Gastrocnemius medialis (tissue), 4 donors: ENCODE measurements at regions of chr11 and their contacts with region 1.

Region 1: GRCh38 chr11:83071567-83072349 is at the start of gene RAB30:
- DNase-seq: peak; percentile 99
- ATAC-seq: peak; percentile 95 to 97
- H3K4me3 ChIP-seq: peak within 1 kb of the TSS; percentile 73 to 90 (median 83)
- H3K27ac ChIP-seq: peak within 1 kb of the TSS; percentile 87 to 98 (median 96)
- H3K4me1 ChIP-seq: peaks cover 42 to 54% of the 10 kb centered on the region in 2 donors
- H3K27me3 ChIP-seq: no peaks in the 10 kb centered on the region
- CTCF ChIP-seq: no peak
- POLR2A ChIP-seq: peak; percentile 91 to 94
- total RNA-seq, gene RAB30: 29.8 to 57.1 (median 33.9) TPM

Region 2: DNA sequence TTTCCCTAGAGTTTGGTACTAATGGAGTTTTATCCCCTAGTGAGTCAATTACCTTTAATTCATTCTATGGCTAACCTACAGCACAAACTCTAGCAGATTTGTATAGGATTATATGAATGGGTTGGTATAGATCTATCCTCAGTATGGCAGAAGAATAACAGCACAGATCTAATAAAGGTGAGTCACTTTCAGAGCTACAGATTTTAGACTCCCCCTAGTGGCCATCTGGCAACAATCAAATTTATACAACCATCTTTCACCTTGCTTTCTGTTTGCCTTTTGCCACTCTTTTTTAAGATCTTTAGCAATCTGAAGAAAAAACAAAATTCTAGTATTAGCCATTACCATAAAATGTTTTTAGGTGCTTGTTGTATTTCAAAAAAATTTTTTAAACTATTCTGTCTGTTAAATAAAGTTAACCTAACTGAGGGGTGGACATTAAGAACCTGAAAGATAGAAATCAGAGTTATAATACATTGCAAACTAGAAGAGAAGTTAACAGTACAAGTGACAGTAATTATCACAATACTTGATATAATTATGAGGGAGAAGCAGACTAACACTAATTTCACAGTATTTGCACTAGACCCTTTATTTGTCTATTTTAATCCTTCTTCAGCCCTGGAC is 144.4 kb before region 1 on chr11:
- in situ Hi-C with region 1: loop called in 2 of 4 experiments (anchors 10 to 25 kb)
- intact Hi-C with region 1: loop called (anchors 5 kb)
- DNase-seq: no peak
- ATAC-seq: peak in 1 of 2 donors; percentile 80
- H3K4me3 ChIP-seq: no peak overlapping the region
- H3K27ac ChIP-seq: no peak overlapping the region
- H3K4me1 ChIP-seq: no peaks in the 10 kb centered on the region
- H3K27me3 ChIP-seq: no peaks in the 10 kb centered on the region
- CTCF ChIP-seq: peak; percentile 56 to 81 (median 58)
- POLR2A ChIP-seq: no peak

Region 3: GRCh38 chr11:83033972-83034672 is 37.6 kb before region 1 on chr11:
- in situ Hi-C with region 1: no loop called
- intact Hi-C with region 1: loop called (anchors 1 kb)
- DNase-seq: peak; percentile 71 to 86
- ATAC-seq: peak; percentile 72 to 77
- H3K4me3 ChIP-seq: peak overlapping the region; percentile 23 to 54 (median 48)
- H3K27ac ChIP-seq: peak overlapping the region; percentile 89 to 94 (median 92)
- H3K4me1 ChIP-seq: peaks cover 75 to 81% of the 10 kb centered on the region in 2 donors
- H3K27me3 ChIP-seq: no peaks in the 10 kb centered on the region
- CTCF ChIP-seq: no peak
- POLR2A ChIP-seq: peak; percentile 41 to 45

Region 4: DNA sequence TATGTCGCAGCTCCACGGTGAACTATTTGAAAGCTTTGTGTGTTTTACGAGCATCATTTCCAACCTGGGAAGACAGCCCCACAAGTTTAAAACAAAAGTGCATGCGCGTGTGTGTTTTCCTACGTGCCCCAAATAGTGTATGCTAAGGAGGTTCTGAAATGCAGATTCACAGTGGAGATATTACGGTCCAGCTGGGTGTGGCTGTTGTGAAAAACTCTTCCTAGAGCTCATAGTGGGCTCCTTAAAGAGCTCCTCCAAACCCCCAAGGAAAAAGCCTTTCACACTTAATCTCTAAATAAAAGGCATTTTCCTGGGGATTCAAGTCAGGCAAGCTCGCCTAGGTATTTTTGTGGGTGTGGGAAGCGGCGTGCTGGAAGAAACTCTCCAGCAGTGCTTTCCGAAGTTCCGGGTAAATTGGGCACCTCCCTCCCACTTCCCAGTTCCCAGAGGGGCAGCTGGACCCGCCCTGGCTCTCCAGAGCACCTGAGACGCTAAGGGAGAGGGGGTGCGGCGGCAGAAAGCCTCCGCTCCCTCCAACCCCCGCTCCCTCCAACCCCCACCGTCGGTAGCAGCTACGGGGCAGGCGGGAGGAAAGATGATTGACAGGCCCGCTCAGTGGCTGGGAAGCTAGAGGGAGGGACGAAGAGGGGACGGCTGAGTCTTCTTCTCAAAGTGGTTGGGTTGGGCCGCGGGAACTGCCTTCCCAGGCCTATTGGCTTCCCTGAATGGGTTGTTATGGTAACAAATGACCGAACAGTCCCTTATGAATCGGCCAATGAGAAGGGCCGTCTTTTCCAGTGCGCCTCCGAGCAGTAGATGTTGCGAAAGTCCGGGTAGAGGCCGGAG is 84.6 kb after region 1 on chr11:
- in situ Hi-C with region 1: loop called in 2 of 4 experiments (anchors 10 to 25 kb)
- intact Hi-C with region 1: loop called (anchors 1 kb)
- DNase-seq: peak; percentile 100
- ATAC-seq: peak; percentile 92
- H3K4me3 ChIP-seq: peak overlapping the region; percentile 61 to 100 (median 82)
- H3K27ac ChIP-seq: peak overlapping the region; percentile 87 to 100 (median 97)
- H3K4me1 ChIP-seq: peaks cover 21% of the 10 kb centered on the region in 2 donors
- H3K27me3 ChIP-seq: no peaks in the 10 kb centered on the region
- CTCF ChIP-seq: no peak
- POLR2A ChIP-seq: peak in 1 of 2 donors; percentile 58

Region 5: DNA sequence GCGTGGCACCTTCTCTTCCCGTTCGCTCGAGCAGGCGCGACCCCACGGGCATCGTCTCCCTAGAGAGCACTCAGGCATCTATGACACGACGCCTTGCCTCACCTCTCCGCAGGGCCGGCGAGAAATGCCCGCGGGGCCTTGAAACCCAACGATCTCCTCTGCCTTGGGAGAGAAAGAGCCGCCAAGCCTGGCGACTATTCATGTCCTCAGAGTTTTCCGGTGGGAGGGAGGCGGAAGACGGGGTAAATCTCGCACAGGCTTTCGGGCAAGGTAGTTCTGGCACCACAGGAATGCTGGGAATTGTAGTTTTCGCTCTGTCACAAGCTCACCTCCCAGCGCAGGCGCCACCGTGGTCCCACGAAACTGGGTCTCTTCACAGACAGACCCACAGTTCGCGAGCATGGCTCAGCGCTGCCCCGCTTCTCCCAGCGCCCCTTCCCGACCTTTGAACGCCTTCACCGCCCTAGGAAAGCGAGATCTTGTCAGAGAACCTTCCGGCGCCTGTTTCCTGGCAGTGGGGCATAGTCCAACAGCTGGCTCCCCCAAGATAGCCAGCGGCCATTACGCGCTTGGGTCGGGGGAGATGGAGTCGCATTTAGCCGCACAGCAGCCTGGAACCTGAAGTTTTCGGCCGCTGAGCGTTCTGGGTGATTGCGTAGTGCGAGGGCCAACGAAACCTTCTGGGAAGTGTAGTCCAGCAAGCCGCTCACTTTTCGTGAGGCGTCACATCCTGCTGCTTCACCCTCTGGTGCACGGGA is 214.2 kb after region 1 on chr11 and contains the start of gene CCDC90B:
- in situ Hi-C with region 1: loop called in 1 of 4 experiments (anchors 10 kb)
- intact Hi-C with region 1: loop called (anchors 1 kb)
- DNase-seq: peak; percentile 96 to 97
- ATAC-seq: peak; percentile 97 to 98
- H3K4me3 ChIP-seq: peak within 1 kb of the TSS; percentile 80 to 94 (median 90)
- H3K27ac ChIP-seq: peak within 1 kb of the TSS; percentile 95 to 98 (median 97)
- H3K4me1 ChIP-seq: peaks cover 36 to 37% of the 10 kb centered on the region in 2 donors
- H3K27me3 ChIP-seq: no peaks in the 10 kb centered on the region
- CTCF ChIP-seq: peak in 1 of 5 experiments; percentile 7
- POLR2A ChIP-seq: peak; percentile 83 to 88
- total RNA-seq, gene CCDC90B: 18.1 to 30.1 (median 22.8) TPM

Region 6: GRCh38 chr11:83459802-83460201 is 388.0 kb after region 1 on chr11:
- in situ Hi-C with region 1: no loop called
- intact Hi-C with region 1: no loop called
- DNase-seq: no peak
- ATAC-seq: no peak
- H3K4me3 ChIP-seq: no peak overlapping the region
- H3K27ac ChIP-seq: no peak overlapping the region
- H3K4me1 ChIP-seq: no peaks in the 10 kb centered on the region
- H3K27me3 ChIP-seq: no peaks in the 10 kb centered on the region
- CTCF ChIP-seq: no peak
- POLR2A ChIP-seq: no peak